Activated T-helper 2 cell treated with anti-CD3 and anti-CD28 coated beads, Interferon-gamma antibody, Interleukin-2, Interleukin-4, amounts not matched to agents 10 μg/mL and 5 μg/mL and 100 μg/mL, durations not matched to agents 14 hours and 24 hours and 36 hours (primary cell): ENCODE measurements at regions of chr6 and their contacts with region 1.

Region 1: GRCh38 chr6:57172136-57173055 is at the start of gene BAG2:
- DNase-seq: peak; percentile 92
- H3K4me3 Mint-ChIP-seq: peak within 1 kb of the TSS; percentile 97
- H3K27ac Mint-ChIP-seq: peak within 1 kb of the TSS; percentile 93
- H3K4me1 Mint-ChIP-seq: peaks cover 25% of the 10 kb centered on the region
- H3K27me3 Mint-ChIP-seq: no peaks in the 10 kb centered on the region
- total RNA-seq, gene BAG2: 13.6 and 14.3 TPM in 2 replicates

Region 2: GRCh38 chr6:56955171-56956045 is 217.0 kb before region 1 on chr6:
- intact Hi-C with region 1: loop called (anchors 10 kb)
- DNase-seq: peak; percentile 54
- H3K4me3 Mint-ChIP-seq: peak overlapping the region; percentile 74
- H3K27ac Mint-ChIP-seq: no peak overlapping the region
- H3K4me1 Mint-ChIP-seq: peaks cover 21% of the 10 kb centered on the region
- H3K27me3 Mint-ChIP-seq: peaks cover 67% of the 10 kb centered on the region

Region 3: GRCh38 chr6:57089687-57090460 is 82.5 kb before region 1 on chr6 and contains the start of gene ZNF451:
- intact Hi-C with region 1: loop called (anchors 1 kb)
- DNase-seq: peak; percentile 95
- H3K4me3 Mint-ChIP-seq: peak within 1 kb of the TSS; percentile 73
- H3K27ac Mint-ChIP-seq: peak within 1 kb of the TSS; percentile 81
- H3K4me1 Mint-ChIP-seq: peaks cover 36% of the 10 kb centered on the region
- H3K27me3 Mint-ChIP-seq: no peaks in the 10 kb centered on the region
- total RNA-seq, gene ZNF451: 57.7 and 60.3 TPM in 2 replicates

Region 4: GRCh38 chr6:57108691-57109090 is 63.7 kb before region 1 on chr6:
- intact Hi-C with region 1: no loop called
- DNase-seq: no peak
- H3K4me3 Mint-ChIP-seq: no peak overlapping the region
- H3K27ac Mint-ChIP-seq: no peak overlapping the region
- H3K4me1 Mint-ChIP-seq: peaks cover 31% of the 10 kb centered on the region
- H3K27me3 Mint-ChIP-seq: no peaks in the 10 kb centered on the region

Region 5: DNA sequence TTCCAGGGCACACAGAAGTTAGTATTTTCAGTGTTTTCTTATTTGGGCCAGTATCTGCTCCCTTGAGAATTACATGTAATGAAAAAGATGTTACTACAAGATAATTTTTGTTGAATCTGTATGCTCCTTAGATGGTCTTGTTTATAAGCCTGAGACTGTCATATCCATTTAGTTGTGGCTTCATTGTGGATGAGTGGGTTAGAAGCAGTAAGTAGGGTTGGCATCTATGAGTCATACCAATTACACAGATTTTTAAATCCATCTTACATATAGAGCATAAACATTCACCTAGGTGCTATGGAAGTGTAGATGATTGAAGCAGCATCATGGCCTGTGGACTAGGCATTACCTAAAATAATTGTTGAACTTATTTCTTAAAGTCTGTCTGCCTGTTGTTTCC is 13.7 kb before region 1 on chr6:
- intact Hi-C with region 1: loop called (anchors 1 kb)
- DNase-seq: no peak
- H3K4me3 Mint-ChIP-seq: no peak overlapping the region
- H3K27ac Mint-ChIP-seq: peak overlapping the region; percentile 34
- H3K4me1 Mint-ChIP-seq: peaks cover 14% of the 10 kb centered on the region
- H3K27me3 Mint-ChIP-seq: no peaks in the 10 kb centered on the region

Region 6: DNA sequence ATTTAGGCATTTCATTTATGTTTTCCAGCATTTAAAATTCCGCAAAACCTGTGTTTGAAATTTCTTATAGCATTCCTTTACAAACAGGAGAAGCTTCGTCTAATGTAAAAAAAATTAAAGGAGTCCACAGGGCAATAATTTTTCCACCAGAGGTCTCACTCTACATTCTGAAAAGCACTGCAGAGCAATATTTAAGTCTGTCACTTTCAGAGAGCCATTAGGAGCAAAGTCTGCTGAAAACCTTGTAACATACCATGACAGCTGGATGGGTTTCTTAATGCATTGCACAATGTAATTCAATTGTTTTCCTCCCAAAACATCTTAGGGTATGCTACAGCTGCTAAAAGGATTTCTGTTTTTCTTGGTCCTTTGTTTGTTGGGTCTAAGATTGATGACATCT is 17.7 kb after region 1 on chr6:
- intact Hi-C with region 1: no loop called
- DNase-seq: no peak
- H3K4me3 Mint-ChIP-seq: no peak overlapping the region
- H3K27ac Mint-ChIP-seq: no peak overlapping the region
- H3K4me1 Mint-ChIP-seq: peaks cover 5% of the 10 kb centered on the region
- H3K27me3 Mint-ChIP-seq: no peaks in the 10 kb centered on the region

Region 7: GRCh38 chr6:57221936-57222742 is 49.7 kb after region 1 on chr6 and contains the start of gene RAB23:
- intact Hi-C with region 1: loop called (anchors 1 kb)
- DNase-seq: peak; percentile 82
- H3K4me3 Mint-ChIP-seq: peak within 1 kb of the TSS; percentile 99
- H3K27ac Mint-ChIP-seq: peak within 1 kb of the TSS; percentile 97
- H3K4me1 Mint-ChIP-seq: peaks cover 26% of the 10 kb centered on the region
- H3K27me3 Mint-ChIP-seq: peaks cover 27% of the 10 kb centered on the region
- total RNA-seq, gene RAB23: 4.8 and 5.1 TPM in 2 replicates

Region 8: DNA sequence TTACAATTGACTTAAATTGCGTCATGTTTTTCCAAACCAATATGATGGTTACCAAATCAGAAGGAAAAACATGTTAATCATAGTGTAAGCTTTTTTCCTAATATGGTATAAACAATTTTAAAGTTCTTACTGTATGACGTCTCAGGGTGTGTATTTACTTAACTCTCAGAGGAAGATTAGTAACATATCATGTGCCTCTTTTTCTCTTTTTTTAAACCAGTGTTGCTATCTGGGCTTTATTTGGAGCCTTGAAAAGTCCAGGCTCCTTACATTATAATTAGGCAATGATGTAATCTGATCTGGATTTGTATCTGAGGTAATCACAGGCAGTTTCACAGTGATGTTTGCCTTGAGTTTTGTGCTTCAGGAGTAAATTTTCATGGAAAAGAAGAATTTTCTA is 70.1 kb after region 1 on chr6:
- intact Hi-C with region 1: no loop called
- DNase-seq: no peak
- H3K4me3 Mint-ChIP-seq: no peak overlapping the region
- H3K27ac Mint-ChIP-seq: no peak overlapping the region
- H3K4me1 Mint-ChIP-seq: no peaks in the 10 kb centered on the region
- H3K27me3 Mint-ChIP-seq: peaks cover 3% of the 10 kb centered on the region